ENCODE measurements at regions of chr4 and their contacts with region 1.

Region 1: DNA sequence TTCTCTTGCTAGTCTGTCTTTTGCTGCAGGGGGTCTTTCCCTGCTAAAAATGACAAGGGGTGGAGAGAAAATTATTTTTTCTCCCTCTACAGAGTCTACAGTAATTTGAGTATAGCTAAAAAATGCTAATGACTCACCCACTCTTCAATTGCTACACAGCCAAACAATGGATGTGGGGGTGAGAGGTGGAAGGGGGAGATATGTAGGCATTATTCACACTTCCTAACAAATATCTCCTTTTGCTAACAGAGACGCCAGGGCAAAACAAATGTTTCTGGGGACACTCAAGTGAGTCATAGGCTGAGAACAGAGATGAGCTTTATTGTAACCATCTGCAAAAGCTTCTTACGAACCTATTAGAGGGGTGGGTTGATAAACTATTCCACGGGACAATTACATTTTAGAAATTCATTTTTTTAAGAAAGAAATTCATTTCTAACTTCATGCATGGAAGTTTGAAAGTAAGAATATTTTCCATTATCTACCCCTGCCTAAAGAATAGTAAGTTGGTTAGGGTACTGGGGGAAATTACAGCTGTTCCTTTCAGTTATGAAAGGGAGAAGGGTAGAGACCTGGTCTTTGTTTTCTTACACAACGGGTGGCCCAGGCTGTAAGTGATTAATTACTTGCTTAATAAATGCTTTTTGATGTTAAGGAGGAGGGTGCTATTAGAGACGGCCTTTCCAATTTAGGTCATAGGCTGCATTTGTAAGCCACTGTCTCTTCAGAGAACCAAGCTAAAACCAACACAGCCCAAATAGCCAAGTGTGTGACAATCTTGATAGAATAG is 12.8 kb downstream of the SCD5 start:
- DNase-seq: peak; percentile 48 to 62
- ATAC-seq: peak; percentile 68 to 81
- H3K4me3 ChIP-seq: 0 out of 3 replicates have a peak overlapping the region, but pooled peaks have one; percentile 18
- H3K27ac ChIP-seq: peak overlapping the region; percentile 71 to 74
- H3K4me1 ChIP-seq: peaks cover 55% of the 10 kb centered on the region
- CTCF ChIP-seq: no peak
- EP300 ChIP-seq: no peak
- POLR2A ChIP-seq: no peak
- RAD21 ChIP-seq: no peak

Region 2: DNA sequence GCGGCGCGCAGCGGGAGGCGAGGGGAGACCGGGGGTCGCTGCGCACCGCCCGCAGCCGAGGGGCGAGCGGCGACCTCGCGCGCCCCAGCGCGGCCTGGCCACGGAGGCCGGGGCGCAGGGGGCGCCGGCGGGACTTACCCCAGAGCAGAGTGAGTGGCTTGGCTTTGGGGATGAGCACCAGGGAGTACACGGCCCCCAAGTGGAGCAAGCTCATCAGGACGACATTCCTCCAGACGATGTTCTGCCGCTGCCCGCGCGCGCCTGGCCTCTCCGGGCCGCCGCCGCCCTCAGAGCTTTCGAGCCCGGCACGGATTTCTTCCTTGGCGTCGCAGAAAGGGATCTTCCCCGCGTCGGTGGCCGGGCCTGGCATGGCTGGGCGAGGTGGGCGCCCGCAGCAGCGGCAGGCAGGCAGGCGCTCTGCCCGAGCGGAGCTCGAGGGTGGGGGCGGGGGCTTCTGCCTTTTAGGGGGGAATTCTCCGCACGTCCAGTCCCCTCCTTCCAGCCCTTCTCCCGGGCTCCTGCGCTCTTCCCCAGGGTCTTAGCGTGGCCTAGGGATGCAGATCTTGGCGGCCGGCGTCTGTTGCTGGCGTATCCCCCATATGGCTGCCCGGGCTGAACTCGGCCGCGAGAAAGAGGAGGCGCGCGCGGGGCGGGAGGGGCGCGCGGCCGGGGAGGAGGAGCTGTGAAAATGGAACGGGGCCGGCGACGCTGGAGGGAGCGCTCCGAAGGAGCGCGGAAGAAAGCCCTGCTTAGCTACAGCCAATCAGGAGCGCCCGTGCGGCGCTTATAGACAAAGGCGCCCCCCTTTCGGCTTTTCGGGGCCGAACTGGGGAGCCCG is 12.6 kb after region 1 on chr4 and contains the start of gene SCD5:
- CTCF ChIA-PET with region 1: interaction called, 5 read pairs
- POLR2A ChIA-PET with region 1: interaction called, 15 read pairs
- DNase-seq: peak; percentile 53
- ATAC-seq: peak; percentile 80 to 93
- H3K4me3 ChIP-seq: peak within 1 kb of the TSS; percentile 91
- H3K27ac ChIP-seq: peak within 1 kb of the TSS; percentile 79 to 83
- H3K4me1 ChIP-seq: peaks cover 6% of the 10 kb centered on the region; the same call in 1 of the 3 replicates
- CTCF ChIP-seq: no peak
- EP300 ChIP-seq: no peak
- POLR2A ChIP-seq: no peak
- RAD21 ChIP-seq: no peak
- polyA plus RNA-seq, gene SCD5: 11.3 and 11.9 TPM in 2 replicates